GM18951 (cell line): ENCODE measurements at regions of chr6 and their contacts with region 1.

Region 1: DNA sequence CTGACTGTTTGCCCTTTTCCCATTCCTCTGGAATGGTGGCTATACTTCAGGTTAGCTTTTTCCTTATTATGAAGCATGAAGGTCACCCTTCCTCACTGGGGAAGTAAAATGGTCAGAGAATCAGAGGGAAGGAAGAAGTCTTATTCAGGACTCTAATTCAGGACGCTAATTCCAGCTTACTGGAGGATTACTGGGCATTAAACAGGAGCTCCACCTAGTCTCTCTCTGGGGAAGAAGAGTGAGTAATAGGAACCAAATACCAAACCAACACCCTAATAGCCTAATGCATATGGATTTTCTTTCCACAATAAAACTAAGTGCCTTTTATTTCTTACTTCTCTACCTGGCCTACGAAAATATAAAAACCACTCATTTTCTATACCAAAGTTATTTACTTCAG is 10.1 kb downstream of the CRISP1 start:
- POLR2A ChIP-seq: no peak

Region 2: GRCh38 chr6:49519660-49520059 is 336.6 kb before region 1 on chr6:
- in situ Hi-C with region 1: loop called (anchors 25 kb)
- POLR2A ChIP-seq: no peak

Region 3: DNA sequence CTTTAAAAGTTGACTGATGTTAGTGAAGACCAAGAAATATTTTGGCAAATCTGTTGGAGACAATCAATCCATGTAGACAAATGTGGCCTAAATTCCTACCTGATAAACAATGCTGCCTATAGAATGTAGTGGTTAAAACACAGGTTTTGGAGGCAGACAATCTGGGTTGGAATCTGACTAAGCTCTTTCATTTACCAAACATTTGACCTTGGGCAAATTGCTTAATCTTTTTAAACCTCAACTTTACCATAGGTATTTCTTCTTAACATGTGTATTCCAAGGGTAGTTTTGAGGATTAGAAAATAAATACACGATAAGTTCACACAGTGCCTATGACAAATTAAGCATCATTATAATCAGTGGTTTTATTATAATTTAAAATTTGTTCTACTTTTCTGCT is 231.1 kb before region 1 on chr6:
- in situ Hi-C with region 1: loop called (anchors 5 kb)
- POLR2A ChIP-seq: no peak

Region 4: GRCh38 chr6:49915035-49915434 is 58.8 kb after region 1 on chr6:
- in situ Hi-C with region 1: no loop called
- POLR2A ChIP-seq: no peak

Region 5: DNA sequence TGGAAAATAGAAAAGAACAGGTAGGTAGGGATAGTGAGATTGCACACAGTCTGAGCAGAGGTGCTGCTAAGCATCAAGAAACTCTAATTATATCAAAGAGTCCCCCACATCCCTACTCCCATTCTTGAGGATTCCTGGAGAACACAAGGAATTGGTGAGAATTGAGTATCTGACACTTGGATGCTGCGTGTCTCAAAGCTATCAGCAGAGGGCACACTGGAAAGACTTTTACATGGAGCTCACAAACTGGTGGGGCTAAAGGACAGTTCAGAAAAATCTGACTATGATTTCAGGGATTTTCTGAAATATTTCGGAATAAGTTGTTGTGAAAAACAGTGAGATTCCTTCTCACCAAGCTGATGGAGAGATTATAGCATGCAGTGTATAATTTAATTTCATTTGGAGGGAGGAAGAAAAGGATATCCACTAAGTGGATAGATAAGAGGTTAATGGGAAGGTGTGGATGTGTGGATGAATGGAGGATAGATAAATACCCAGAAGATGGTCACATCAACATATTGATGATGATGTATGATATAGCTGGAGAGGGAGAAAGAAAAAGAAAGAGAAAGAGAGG is 408.8 kb after region 1 on chr6:
- in situ Hi-C with region 1: no loop called
- POLR2A ChIP-seq: no peak

Region 6: GRCh38 chr6:50655848-50656453 is 799.7 kb after region 1 on chr6:
- in situ Hi-C with region 1: no loop called
- POLR2A ChIP-seq: no peak